ENCODE measurements at regions of chr21 and their contacts with region 1.

Region 1: DNA sequence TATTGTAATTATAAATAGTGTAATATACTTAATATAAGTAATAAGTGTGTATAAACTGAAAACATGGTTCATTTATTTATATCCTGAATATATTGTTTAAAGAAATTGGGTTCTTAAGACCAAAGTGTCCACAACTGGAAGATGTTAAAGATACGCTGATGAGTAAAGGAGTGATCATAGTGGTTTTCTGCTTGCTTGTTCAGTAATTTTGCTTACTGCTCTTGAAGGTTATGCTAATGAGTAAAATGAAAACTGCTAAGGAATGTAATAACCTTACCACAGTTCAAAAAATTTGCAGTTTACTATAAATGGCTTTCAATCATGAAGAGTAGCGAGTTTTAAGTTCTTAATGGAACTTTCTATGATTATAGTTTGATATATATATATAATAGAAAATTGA is 22.0 kb downstream of the DONSON start:
- DNase-seq: no peak
- ATAC-seq: peak; percentile 74
- H3K4me3 Mint-ChIP-seq: no peak overlapping the region
- H3K27ac Mint-ChIP-seq: no peak overlapping the region
- H3K4me1 Mint-ChIP-seq: peaks cover 38% of the 10 kb centered on the region
- H3K27me3 Mint-ChIP-seq: no peaks in the 10 kb centered on the region

Region 2: DNA sequence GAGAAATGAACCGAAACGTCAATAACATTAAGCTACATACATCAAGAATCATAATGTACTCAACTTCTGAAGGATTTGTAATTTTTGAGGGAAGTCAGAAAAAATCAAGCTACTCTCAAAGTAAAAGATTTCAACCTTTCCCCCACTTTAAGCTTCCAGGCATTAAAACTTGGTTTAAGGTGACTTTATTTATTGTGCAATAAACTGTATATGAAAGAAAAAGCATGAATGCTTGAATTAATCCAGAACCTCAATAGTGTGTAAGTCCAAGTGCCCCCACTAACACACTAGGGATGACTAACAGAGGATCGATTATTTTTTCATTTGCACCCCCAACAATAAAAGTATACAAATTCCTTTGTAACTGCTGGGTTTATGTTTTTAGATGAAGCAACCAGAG is 35.5 kb before region 1 on chr21:
- CTCF ChIA-PET with region 1: no interaction called
- POLR2A ChIA-PET with region 1: no interaction called
- intact Hi-C with region 1: loop called in 1 of 2 experiments (anchors 5 kb)
- DNase-seq: no peak
- ATAC-seq: no peak
- H3K4me3 Mint-ChIP-seq: no peak overlapping the region
- H3K27ac Mint-ChIP-seq: peak overlapping the region; percentile 19
- H3K4me1 Mint-ChIP-seq: no peaks in the 10 kb centered on the region
- H3K27me3 Mint-ChIP-seq: no peaks in the 10 kb centered on the region

Region 3: DNA sequence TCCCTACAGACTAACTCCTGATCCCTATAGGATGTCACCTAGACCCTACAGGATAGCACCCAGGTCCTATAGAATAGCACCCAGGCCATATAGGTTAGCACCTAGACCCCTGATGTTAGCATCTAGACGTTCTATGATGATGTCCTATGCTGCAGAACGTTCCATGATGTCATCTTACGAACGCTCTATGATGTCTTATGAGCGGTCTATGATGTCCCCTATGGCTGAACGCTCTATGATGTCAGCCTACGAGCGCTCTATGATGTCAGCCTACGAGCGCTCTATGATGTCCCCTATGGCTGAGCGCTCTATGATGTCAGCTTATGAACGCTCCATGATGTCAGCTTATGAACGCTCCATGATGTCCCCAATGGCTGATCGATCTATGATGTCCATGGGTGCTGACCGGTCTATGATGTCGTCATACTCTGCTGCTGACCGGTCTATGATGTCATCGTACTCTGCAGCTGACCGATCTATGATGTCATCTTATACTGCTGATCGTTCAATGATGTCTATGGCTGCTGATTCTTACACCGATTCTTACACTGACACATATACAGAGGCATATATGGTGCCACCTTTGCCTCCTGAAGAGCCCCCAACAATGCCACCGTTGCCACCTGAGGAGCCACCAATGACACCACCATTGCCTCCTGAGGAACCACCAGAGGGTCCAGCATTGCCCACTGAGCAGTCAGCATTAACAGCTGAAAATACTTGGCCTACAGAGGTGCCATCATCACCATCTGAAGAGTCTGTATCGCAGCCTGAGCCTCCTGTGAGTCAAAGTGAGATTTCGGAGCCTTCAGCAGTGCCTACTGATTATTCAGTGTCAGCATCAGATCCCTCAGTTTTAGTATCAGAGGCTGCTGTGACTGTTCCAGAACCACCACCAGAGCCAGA is 14.2 kb before region 1 on chr21:
- CTCF ChIA-PET with region 1: interaction called, 3 read pairs
- POLR2A ChIA-PET with region 1: interaction called, 6 read pairs
- intact Hi-C with region 1: loop called in 1 of 2 experiments (anchors 2 kb)
- DNase-seq: no peak
- ATAC-seq: peak; percentile 51
- H3K4me3 Mint-ChIP-seq: no peak overlapping the region
- H3K27ac Mint-ChIP-seq: peak overlapping the region; percentile 60
- H3K4me1 Mint-ChIP-seq: peaks cover 54% of the 10 kb centered on the region
- H3K27me3 Mint-ChIP-seq: no peaks in the 10 kb centered on the region

Region 4: DNA sequence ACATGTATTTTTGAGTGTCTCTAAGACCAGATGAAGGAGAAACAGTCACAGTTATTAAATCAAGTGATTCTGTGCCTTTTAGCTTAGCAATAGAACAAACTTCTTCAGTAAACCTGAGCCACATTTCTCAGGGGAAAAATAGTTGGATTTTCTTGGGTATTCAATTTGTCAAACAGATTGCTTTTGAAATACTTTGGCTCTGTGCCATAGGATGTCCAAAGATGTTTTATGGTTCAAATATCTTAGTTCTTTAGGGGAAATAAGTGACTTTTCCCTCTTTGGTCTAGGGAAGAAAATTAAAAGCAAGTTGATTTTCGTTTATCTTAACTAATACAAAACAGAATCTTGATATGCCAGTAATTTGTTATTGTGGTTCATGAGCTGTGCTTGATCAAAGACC is 223.2 kb after region 1 on chr21:
- CTCF ChIA-PET with region 1: no interaction called
- POLR2A ChIA-PET with region 1: no interaction called
- intact Hi-C with region 1: no loop called
- DNase-seq: no peak
- ATAC-seq: no peak
- H3K4me3 Mint-ChIP-seq: no peak overlapping the region
- H3K27ac Mint-ChIP-seq: no peak overlapping the region
- H3K4me1 Mint-ChIP-seq: no peaks in the 10 kb centered on the region
- H3K27me3 Mint-ChIP-seq: no peaks in the 10 kb centered on the region

Measured in activated CD4-positive, alpha-beta T cell treated with anti-CD3 and anti-CD28 coated beads for 36 hours (primary cell).